Mammary epithelial cell (primary cell): ENCODE measurements at regions of chr4 and their contacts with region 1.

Region 1: DNA sequence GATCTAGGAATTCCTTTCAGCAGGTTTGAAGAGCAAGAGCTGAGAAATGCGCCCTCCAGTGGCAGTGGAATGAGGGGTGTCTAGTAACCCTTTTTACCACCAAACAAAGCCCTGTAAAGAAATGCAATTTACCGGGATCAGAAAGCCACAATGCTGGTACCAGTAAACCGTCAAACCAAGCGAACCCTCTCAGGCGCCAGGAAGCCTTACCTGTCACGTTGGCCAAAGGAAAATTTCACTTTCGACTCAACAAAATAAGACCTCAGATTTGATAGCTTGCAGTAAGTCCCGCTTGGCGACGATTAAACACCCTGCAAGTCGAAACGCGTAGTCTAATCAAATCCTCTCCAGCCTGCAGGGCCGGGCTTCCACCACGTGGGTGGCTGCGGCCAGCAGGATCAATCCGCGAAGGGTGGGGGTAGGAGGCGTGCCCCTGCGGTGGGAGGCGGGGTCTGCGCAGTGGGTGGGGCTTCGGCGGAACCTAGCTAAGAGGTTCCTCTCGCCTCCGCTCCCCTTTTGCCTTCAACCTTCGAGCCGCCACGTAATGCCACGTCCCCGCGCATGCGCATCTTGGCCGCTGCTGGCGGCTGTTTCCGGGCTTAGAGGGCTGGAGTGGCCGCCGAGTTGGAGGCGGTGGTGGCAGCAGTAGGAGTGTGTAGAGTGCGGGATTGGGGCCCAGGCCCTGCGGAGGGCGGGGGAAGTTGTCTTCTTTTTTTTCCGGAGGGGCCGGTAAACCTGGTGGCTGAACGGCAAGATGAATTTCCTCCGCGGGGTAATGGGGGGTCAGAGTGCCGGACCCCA is at the start of gene USO1:
- DNase-seq: peak; percentile 99
- H3K4me3 ChIP-seq: peak within 1 kb of the TSS; percentile 87 to 100 (median 93)
- H3K27ac ChIP-seq: peak within 1 kb of the TSS; percentile 90
- H3K4me1 ChIP-seq: peaks cover 20% of the 10 kb centered on the region
- H3K27me3 ChIP-seq: no peaks in the 10 kb centered on the region
- CTCF ChIP-seq: peak; percentile 84 to 92
- total RNA-seq, gene USO1: 72.9 to 80.9 TPM

Region 2: DNA sequence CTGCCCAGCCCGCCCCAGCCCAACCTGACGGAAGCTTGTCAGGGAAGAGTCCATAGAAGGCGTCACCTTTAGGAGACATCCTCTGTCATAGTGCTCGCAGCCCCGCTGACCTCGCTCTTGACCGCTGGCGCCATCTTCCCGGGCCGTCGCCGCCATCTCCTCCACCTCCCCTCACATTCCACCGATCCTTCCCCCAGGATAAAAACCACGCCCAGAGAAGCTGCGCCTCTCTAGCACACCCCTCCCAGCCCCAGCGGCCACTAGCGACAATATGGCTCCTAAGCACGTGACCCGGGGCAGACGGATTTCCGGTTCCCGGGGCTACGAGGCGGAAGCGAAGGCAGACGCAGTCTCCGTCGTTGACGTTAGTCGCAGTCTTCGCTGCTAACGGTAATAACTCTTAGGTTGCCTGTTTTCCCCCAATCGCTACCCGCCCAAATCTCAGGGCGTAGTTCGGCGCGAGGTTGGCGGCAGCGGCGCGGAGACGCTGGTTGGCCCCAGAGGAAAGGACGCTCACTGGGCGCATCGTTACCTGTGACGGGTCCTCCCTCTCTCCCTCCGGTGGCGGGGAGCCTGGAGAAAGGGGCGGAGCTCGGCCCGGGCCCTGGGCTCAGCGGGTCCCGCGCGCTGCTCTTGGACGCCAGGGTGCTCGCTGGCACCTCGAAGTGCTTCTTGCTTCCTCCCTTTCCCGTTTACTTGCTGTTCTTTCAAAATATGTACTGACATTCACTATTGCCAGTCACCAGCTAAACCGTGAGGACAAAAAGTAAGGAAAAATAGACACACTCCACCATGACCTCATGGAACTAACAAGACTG is 209.9 kb before region 1 on chr4 and contains the starts of genes RCHY1 and THAP6:
- CTCF ChIA-PET with region 1: no interaction called
- dilution Hi-C with region 1: no loop called
- in situ Hi-C with region 1: no loop called
- intact Hi-C with region 1: loop called (anchors 10 kb)
- DNase-seq: peak; percentile 97
- H3K4me3 ChIP-seq: peak within 1 kb of the TSS; percentile 62 to 93 (median 87)
- H3K27ac ChIP-seq: peak within 1 kb of the TSS; percentile 94
- H3K4me1 ChIP-seq: peaks cover 23% of the 10 kb centered on the region
- H3K27me3 ChIP-seq: no peaks in the 10 kb centered on the region
- CTCF ChIP-seq: peak in 1 of 2 donors; percentile 13
- total RNA-seq, gene RCHY1: 25.1 to 35.5 TPM
- total RNA-seq, gene THAP6: 14.0 to 19.5 TPM

Region 3: GRCh38 chr4:75653845-75654503 is 70.3 kb before region 1 on chr4:
- CTCF ChIA-PET with region 1: interaction called, 4 read pairs
- dilution Hi-C with region 1: no loop called
- in situ Hi-C with region 1: no loop called
- intact Hi-C with region 1: loop called (anchors 1 kb)
- DNase-seq: peak; percentile 46
- H3K4me3 ChIP-seq: no peak overlapping the region
- H3K27ac ChIP-seq: no peak overlapping the region
- H3K4me1 ChIP-seq: peaks cover 3% of the 10 kb centered on the region
- H3K27me3 ChIP-seq: no peaks in the 10 kb centered on the region
- CTCF ChIP-seq: peak; percentile 56 to 70

Region 4: DNA sequence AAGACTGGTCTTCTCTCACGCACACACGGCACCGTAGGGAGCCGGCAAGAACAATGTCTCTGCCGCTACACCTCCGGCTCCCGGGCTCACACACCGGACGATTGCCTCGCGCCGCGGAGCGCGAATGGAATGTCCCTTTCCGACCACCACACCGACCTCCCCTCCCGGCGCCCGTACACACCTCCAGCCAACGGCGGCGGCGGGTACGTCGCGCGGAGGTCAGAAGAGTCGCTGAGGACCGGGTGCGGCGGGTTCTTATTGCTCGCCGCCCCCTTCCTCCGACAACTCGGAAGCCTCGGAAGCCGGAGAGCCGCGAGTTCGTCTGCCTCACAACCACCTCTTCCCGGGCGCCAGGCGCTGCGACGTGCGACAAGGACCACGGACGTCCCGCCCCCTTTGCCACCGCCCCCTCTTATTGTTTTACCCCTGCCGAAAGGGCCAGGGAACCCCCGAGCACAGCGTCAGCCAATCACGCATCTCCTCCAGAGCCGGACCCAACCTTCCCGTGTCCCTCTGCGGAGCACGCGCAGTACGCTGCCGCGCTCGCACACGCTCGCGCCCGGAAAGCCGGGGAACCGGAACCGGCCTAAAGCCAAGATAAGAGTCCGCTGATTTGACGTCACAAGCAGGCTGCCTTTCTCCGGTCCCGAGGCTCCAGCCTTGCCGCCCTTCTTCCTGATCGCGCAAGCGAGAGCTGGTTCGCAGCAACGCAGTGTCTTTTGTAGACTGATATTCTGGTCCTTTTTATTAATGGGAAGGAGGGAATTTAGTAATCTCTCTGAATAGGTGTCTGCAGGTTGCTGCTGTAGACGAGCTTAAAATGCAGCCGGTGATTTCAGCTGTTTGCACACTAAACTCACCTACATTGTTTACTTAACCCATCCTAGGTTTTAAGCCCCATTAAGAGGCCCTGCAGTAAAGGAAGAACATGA is 51.0 kb before region 1 on chr4 and contains the start of gene G3BP2:
- CTCF ChIA-PET with region 1: no interaction called
- dilution Hi-C with region 1: loop called (anchors 5 kb)
- in situ Hi-C with region 1: loop called in 1 of 2 experiments (anchors 10 kb)
- intact Hi-C with region 1: loop called (anchors 1 kb)
- DNase-seq: peak; percentile 98
- H3K4me3 ChIP-seq: peak within 1 kb of the TSS; percentile 92 to 95 (median 94)
- H3K27ac ChIP-seq: peak within 1 kb of the TSS; percentile 91
- H3K4me1 ChIP-seq: peaks cover 15% of the 10 kb centered on the region
- H3K27me3 ChIP-seq: no peaks in the 10 kb centered on the region
- CTCF ChIP-seq: no peak
- total RNA-seq, gene G3BP2: 146 to 192 TPM

Region 5: GRCh38 chr4:75848891-75849290 is 124.6 kb after region 1 on chr4:
- CTCF ChIA-PET with region 1: no interaction called
- dilution Hi-C with region 1: no loop called
- in situ Hi-C with region 1: no loop called
- intact Hi-C with region 1: loop called (anchors 1 kb)
- DNase-seq: peak; percentile 15
- H3K4me3 ChIP-seq: no peak overlapping the region
- H3K27ac ChIP-seq: no peak overlapping the region
- H3K4me1 ChIP-seq: peaks cover 3% of the 10 kb centered on the region
- H3K27me3 ChIP-seq: no peaks in the 10 kb centered on the region
- CTCF ChIP-seq: no peak